Endothelial cell of umbilical vein (primary cell): ENCODE measurements at regions of chr17 and their contacts with region 1.

Region 1: DNA sequence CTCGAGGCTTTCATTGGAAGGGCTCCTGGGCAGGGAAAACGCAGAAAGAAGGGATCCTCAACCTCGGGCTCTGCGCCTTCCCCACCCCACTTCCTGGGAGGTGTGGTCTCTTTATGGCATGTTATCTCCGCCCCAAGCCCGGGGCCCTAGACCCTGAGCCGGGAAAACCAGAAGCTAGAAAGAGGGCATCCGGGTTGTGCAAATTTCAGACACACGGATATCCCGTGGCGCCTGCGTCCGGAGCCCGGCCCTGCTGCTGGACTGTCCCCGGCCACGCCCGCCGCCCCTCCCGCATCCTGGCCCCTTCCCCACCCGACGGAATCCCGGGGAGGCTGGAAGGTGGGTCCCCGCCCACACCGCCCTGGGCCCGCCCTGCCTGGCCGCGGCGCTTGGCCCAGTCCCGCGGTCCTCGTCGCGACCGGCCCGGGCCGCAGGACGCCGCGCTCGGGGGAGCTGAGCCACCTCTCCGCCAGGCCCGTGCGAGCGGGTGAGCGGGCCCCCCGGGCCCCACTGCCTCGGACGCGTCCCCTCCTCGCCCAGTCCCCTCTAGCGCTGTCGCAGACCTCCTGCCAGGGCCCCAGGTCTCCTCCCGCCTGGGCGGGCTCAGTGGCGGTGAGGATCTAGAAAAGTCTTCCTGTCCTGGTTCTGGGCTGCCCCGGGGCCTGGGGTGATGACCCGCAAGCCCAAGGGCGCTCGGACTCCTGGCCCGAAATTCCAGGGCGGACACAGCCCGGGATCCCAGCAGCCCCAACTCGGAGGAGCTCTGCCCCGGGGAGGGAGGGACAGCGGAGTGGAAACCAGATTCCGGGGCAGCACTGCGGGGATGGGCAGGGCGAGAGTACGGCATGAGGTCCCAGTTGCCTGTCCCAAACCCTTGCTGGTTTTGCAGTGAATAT is at the start of gene SLC16A5:
- DNase-seq: peak; percentile 81
- H3K4me3 ChIP-seq: peak within 1 kb of the TSS; percentile 23 to 52 (median 46)
- H3K27ac ChIP-seq: peak within 1 kb of the TSS; percentile 88
- H3K4me1 ChIP-seq: peaks cover 42% of the 10 kb centered on the region
- H3K27me3 ChIP-seq: no peaks in the 10 kb centered on the region
- CTCF ChIP-seq: no peak
- POLR2A ChIP-seq: peak; percentile 74
- total RNA-seq, gene SLC16A5: 16.4 and 17.4 TPM in 2 replicates

Region 2: DNA sequence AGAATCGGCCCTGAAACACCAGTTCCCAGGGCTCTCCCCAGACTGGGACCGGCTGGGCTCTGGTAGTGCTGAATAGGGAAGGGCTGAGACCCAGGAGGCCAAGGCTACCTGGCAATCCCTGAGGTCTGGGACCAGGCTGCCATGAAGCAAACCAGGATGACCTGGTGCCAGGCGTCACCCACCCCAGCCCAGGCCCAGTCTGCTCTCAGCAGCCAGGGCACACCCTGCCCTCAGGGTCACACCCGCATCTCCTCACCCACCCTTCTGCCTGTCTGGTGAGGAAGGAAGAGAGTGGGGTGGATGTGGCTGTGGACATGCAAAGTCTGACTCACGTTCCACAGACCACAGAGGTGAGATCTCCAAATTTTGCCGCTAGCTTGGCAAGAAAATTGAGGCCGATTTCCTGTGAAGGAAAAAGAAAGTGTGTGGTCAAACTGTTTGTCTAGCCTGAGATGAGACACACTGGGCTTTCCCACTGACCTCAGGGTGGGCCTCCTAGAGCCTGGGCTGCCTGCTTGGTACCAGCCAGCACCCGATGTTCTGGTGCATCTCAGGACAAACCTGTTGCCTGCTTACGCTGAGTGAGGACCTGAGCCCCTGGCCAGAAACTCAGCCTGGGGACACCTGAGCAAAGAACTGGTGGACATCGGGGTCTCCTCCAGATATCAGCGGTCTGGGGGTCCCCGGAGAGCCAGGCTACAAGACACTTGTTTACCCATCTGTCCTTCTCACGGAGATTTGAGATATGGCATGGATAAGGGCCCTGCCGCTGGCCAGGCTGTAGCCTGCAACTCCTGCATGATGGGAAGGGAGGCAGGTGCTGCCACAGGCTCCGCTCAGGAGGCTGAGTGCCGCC is 357.1 kb before region 1 on chr17:
- CTCF ChIA-PET with region 1: no interaction called
- POLR2A ChIA-PET with region 1: no interaction called
- dilution Hi-C with region 1: no loop called
- intact Hi-C with region 1: no loop called
- DNase-seq: no peak
- H3K4me3 ChIP-seq: no peak overlapping the region
- H3K27ac ChIP-seq: no peak overlapping the region
- H3K4me1 ChIP-seq: no peaks in the 10 kb centered on the region
- H3K27me3 ChIP-seq: peaks cover 2 to 5% of the 10 kb centered on the region in 2 experiments
- CTCF ChIP-seq: no peak
- POLR2A ChIP-seq: no peak

Region 3: DNA sequence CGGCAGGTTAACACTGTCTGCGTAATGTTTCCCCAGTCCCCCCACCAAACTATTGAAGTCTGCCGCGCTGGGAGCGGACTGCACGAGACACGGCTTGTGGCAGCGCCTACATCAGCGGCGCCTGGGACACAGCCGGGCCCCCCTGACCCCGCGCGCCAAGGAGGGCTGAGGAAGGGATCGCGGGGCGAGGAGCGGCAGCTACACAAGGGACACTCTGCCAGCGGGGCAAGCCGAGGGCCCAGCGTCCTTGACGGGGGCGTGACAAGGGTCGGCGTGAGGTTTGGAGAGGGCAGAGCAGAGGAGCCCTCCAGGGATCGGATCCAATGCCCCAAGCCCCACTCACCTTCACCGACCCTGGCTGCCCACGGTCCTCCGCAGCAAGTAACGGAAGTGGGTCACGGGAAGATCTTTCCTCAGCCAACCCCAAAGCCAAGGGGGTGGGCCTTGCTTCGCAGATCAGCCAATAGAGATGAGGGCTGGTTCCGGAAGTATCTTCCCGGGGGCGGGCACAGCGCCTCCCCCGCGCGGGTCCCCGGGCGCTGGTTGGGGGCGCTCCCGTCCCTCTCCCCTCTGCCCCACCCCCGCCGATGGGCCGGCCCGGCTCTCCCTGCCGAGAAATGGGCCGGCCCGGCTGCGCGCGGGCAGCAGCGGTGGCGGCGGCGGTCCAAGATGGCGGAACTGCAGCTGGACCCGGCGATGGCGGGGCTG is 41.1 kb before region 1 on chr17 and contains the starts of genes ATP5PD and KCTD2:
- CTCF ChIA-PET with region 1: no interaction called
- POLR2A ChIA-PET with region 1: no interaction called
- dilution Hi-C with region 1: no loop called
- intact Hi-C with region 1: loop called (anchors 1 kb)
- DNase-seq: peak; percentile 98
- H3K4me3 ChIP-seq: peak within 1 kb of the TSS; percentile 58 to 93 (median 67)
- H3K27ac ChIP-seq: peak within 1 kb of the TSS; percentile 19
- H3K4me1 ChIP-seq: peaks cover 13% of the 10 kb centered on the region
- H3K27me3 ChIP-seq: no peaks in the 10 kb centered on the region
- CTCF ChIP-seq: no peak
- POLR2A ChIP-seq: peak; percentile 93
- total RNA-seq, gene ATP5PD: 200 and 202 TPM in 2 replicates
- total RNA-seq, gene KCTD2: 20.6 and 23.2 TPM in 2 replicates

Region 4: DNA sequence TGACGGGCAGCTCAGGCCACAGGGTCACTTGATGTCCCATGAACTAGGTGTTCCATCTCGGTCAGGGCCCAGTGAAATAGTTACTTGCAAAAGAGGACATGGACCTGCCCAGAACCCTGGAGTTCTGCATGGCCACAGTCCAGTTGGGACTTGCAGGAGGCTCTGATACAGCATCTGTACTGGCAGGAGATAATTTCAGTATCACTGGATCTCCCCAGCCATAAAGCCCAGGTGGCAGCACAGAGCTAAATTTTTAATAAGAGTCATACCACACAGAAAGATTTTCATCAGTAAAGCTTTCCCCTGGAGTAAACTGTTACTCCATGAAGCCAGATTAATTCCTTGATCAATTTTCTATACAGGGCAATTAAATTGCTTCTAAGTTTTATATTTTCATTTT is 18.0 kb before region 1 on chr17:
- CTCF ChIA-PET with region 1: interaction called, 13 read pairs
- POLR2A ChIA-PET with region 1: no interaction called
- dilution Hi-C with region 1: no loop called
- intact Hi-C with region 1: no loop called
- DNase-seq: peak; percentile 45
- H3K4me3 ChIP-seq: no peak overlapping the region
- H3K27ac ChIP-seq: no peak overlapping the region
- H3K4me1 ChIP-seq: peaks cover 6% of the 10 kb centered on the region
- H3K27me3 ChIP-seq: no peaks in the 10 kb centered on the region
- CTCF ChIP-seq: peak in 1 of 2 donors; percentile 23
- POLR2A ChIP-seq: no peak

Region 5: DNA sequence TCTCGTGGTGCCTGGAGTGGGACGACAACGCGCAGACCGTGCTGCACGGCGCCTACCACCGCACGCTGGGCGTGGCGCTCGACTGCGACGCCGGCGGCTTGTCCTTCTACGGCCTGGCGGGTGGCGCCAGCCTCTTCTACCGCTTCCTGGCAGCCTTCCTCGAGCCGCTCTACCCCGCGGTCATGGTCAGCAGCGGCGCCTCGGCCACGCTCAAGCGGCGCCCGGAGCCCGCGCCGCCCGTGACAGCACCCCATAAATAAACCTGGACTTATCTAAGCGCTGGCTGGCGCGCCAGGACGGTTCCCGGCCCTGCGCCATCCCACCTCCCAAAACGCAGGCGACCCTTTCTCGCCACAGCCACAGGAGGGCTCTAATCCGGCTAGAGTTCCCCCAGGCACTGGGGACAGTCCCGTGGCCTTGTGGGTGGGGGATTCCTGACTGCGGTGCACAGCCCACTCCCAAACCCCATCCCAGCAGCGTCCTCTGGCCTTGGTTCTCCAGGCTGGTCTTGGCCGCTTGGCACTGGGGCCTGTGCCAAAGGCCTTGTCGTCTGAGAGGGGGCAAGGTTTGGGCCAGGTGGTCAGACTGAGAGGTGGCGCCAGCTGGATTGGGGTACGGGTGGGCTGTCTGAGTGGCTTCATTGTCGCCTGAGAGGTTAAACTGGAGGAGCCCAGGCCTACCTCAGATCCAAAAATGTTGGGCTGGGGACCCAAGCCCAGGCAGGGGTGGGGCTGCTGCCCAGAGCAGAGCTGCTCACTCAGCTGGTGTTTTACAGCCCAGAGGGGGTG is 10.1 kb before region 1 on chr17:
- CTCF ChIA-PET with region 1: interaction called, 8 read pairs
- POLR2A ChIA-PET with region 1: interaction called, 5 read pairs
- dilution Hi-C with region 1: no loop called
- intact Hi-C with region 1: loop called (anchors 1 kb)
- DNase-seq: peak; percentile 58
- H3K4me3 ChIP-seq: peak overlapping the region in 1 of 3 experiments; percentile 34
- H3K27ac ChIP-seq: peak overlapping the region; percentile 51
- H3K4me1 ChIP-seq: peaks cover 16% of the 10 kb centered on the region
- H3K27me3 ChIP-seq: no peaks in the 10 kb centered on the region
- CTCF ChIP-seq: peak in 1 of 2 donors; percentile 36
- POLR2A ChIP-seq: no peak

Region 6: GRCh38 chr17:75163074-75163473 is 75.3 kb after region 1 on chr17:
- CTCF ChIA-PET with region 1: no interaction called
- POLR2A ChIA-PET with region 1: no interaction called
- dilution Hi-C with region 1: no loop called
- intact Hi-C with region 1: no loop called
- DNase-seq: no peak
- H3K4me3 ChIP-seq: no peak overlapping the region
- H3K27ac ChIP-seq: no peak overlapping the region
- H3K4me1 ChIP-seq: peaks cover 18% of the 10 kb centered on the region
- H3K27me3 ChIP-seq: no peaks in the 10 kb centered on the region
- CTCF ChIP-seq: no peak
- POLR2A ChIP-seq: no peak